Esophagus muscularis mucosa (tissue), 4 donors: ENCODE measurements at regions of chr19 and their contacts with region 1.

Region 1: DNA sequence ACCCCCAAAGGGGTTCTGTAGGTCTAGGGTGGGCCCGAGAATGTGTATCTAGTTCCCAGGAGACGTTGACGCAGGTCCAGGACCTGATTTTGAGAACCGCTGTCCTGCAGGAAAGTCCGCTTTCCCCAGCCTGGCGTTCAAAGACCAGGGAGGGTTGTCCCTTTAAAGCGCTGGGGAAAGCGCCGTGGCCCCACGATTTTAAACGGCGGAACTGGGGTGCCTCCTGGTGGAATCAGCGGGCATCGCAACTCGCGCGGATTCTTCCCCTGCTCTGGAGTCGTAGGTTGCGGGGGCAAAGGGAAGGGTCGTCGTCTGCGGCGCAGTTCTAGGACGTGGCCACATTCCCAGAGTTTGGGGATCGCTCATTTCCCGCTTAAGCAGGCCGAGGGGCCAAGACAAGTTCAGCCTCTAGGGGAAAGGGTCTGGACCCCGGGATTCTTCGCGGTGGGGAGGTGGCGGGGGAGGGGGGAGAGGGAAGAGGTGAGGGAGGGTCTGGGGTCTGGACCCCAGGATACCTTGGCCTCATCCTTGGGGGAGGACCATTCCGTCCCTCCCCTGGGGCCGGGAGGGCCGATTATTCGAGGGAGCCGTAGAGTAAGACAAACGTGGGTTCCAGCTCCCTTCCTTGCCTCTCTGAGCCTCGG is 7.7 kb downstream of the PNMA8B start:
- DNase-seq: peak; percentile 96
- H3K4me3 ChIP-seq: peak overlapping the region; percentile 38 to 49 (median 44)
- H3K27ac ChIP-seq: no peak overlapping the region
- H3K4me1 ChIP-seq: peaks cover 24 to 45% (median 36%) of the 10 kb centered on the region in 4 donors
- H3K27me3 ChIP-seq: peaks cover 0 to 64% (median 21%) of the 10 kb centered on the region in 4 donors
- CTCF ChIP-seq: peak; percentile 93 to 97 (median 94)
- EP300 ChIP-seq: no peak
- POLR2A ChIP-seq: no peak

Region 2: DNA sequence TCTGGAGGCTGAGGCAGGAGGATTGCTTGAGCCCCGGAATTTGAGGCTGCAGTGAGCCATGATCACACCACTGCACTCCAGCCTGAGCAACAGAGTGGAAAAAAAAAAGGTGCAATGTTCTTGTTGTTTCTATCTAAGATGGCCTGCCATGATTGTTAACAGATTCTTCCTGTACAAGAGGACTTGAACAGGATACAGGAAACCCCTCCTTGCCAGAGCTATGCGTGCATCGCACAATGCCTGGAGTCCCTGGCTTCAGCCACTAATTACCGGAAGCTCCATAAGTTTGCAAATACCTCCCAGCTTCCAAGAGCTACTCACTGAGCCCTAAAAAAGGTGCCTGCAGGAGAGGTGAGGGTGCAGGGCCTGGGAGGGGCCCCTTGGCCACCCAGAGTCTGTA is 204.2 kb before region 1 on chr19:
- intact Hi-C with region 1: loop called (anchors 5 kb)
- DNase-seq: no peak
- H3K4me3 ChIP-seq: no peak overlapping the region
- H3K27ac ChIP-seq: peak overlapping the region; percentile 48 to 64 (median 64)
- H3K4me1 ChIP-seq: peaks cover 13 to 31% (median 13%) of the 10 kb centered on the region in 4 donors
- H3K27me3 ChIP-seq: no peaks in the 10 kb centered on the region
- CTCF ChIP-seq: no peak
- EP300 ChIP-seq: no peak
- POLR2A ChIP-seq: no peak

Region 3: GRCh38 chr19:46392243-46392801 is 95.6 kb before region 1 on chr19:
- intact Hi-C with region 1: loop called (anchors 2 kb)
- DNase-seq: no peak
- H3K4me3 ChIP-seq: no peak overlapping the region
- H3K27ac ChIP-seq: peak overlapping the region; percentile 21 to 55 (median 48)
- H3K4me1 ChIP-seq: peaks cover 2 to 35% (median 27%) of the 10 kb centered on the region in 4 donors
- H3K27me3 ChIP-seq: peaks cover 0 to 3% (median 0%) of the 10 kb centered on the region in 4 donors
- CTCF ChIP-seq: no peak
- EP300 ChIP-seq: no peak
- POLR2A ChIP-seq: no peak

Region 4: DNA sequence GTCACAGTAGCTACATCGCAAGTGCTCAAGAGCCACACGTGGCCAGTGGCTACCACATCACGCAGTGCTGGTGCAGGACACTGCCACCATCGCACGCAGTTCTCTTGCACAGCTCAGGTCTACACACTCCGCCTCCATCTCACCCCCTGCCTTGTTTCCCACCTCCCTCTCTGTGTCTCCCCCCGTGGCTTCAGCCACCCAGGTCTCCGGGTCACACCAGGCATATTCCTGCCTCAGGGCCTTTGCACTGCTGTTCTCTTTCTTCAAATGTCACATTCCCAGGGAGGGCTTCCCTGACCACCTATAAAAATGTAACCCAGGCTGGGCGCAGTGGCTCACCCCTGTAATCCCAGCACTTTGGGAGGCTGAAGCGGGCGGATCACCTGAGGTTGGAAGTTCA is 85.2 kb before region 1 on chr19:
- intact Hi-C with region 1: loop called (anchors 2 kb)
- DNase-seq: no peak
- H3K4me3 ChIP-seq: no peak overlapping the region
- H3K27ac ChIP-seq: no peak overlapping the region
- H3K4me1 ChIP-seq: peaks cover 8 to 35% (median 23%) of the 10 kb centered on the region in 4 donors
- H3K27me3 ChIP-seq: peaks cover 4 to 93% (median 24%) of the 10 kb centered on the region in 4 donors
- CTCF ChIP-seq: no peak
- EP300 ChIP-seq: no peak
- POLR2A ChIP-seq: no peak

Region 5: GRCh38 chr19:46639358-46640182 is 151.6 kb after region 1 on chr19:
- intact Hi-C with region 1: no loop called
- DNase-seq: no peak
- H3K4me3 ChIP-seq: peak overlapping the region; percentile 52 to 65 (median 58)
- H3K27ac ChIP-seq: peak overlapping the region; percentile 84 to 91 (median 90)
- H3K4me1 ChIP-seq: peaks cover 24 to 46% (median 36%) of the 10 kb centered on the region in 4 donors
- H3K27me3 ChIP-seq: peaks cover 0 to 7% (median 0%) of the 10 kb centered on the region in 4 donors
- CTCF ChIP-seq: no peak
- EP300 ChIP-seq: no peak
- POLR2A ChIP-seq: no peak